Psoas muscle (tissue), 8 donors: ENCODE measurements at regions of chr12 and their contacts with region 1.

Region 1: GRCh38 chr12:122526683-122527477 is at the starts of genes KNTC1 and RSRC2:
- DNase-seq: peak; percentile 95 to 98
- ATAC-seq: peak; percentile 93 to 98 (median 97)
- H3K4me3 ChIP-seq: peak within 1 kb of the TSS; percentile 85
- H3K27ac ChIP-seq: peak within 1 kb of the TSS; percentile 98
- H3K4me1 ChIP-seq: peaks cover 48% of the 10 kb centered on the region
- H3K27me3 ChIP-seq: no peaks in the 10 kb centered on the region
- CTCF ChIP-seq: no peak
- total RNA-seq, gene KNTC1: 1.5 to 2.5 (median 2.2) TPM
- total RNA-seq, gene RSRC2: 44.0 to 64.6 (median 53.3) TPM

Region 2: GRCh38 chr12:122265931-122266771 is 260.7 kb before region 1 on chr12 and contains the start of gene VPS33A:
- intact Hi-C with region 1: loop called in 1 of 2 experiments (anchors 2 kb)
- DNase-seq: peak; percentile 96 to 98
- ATAC-seq: peak; percentile 91 to 95 (median 92)
- H3K4me3 ChIP-seq: peak within 1 kb of the TSS; percentile 99
- H3K27ac ChIP-seq: peak within 1 kb of the TSS; percentile 89
- H3K4me1 ChIP-seq: peaks cover 13% of the 10 kb centered on the region
- H3K27me3 ChIP-seq: no peaks in the 10 kb centered on the region
- CTCF ChIP-seq: no peak
- total RNA-seq, gene VPS33A: 17.1 to 20.0 (median 17.2) TPM

Region 3: DNA sequence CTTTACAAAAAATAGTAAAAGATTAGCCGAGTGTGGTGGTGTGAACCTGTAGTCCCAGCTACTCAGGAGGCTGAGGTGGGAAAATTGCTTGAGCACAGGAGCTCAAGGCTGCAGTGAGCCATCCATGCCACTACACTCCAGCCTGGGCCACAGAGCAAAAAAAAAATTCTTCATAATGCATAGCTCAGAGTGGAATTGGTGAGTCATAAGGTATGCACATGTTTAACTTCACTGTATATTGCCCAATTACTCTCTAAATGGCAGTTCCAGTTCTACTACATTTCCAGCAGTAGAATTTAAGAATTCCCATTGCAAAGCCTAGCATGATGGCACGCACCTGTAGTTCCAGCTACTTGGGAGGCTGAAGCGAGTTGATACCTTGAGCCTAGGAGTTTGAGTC is 77.5 kb before region 1 on chr12:
- intact Hi-C with region 1: no loop called
- DNase-seq: no peak
- ATAC-seq: no peak
- H3K4me3 ChIP-seq: no peak overlapping the region
- H3K27ac ChIP-seq: no peak overlapping the region
- H3K4me1 ChIP-seq: no peaks in the 10 kb centered on the region
- H3K27me3 ChIP-seq: no peaks in the 10 kb centered on the region
- CTCF ChIP-seq: no peak

Region 4: GRCh38 chr12:122500685-122501488 is 26.0 kb before region 1 on chr12 and contains the start of gene ZCCHC8:
- intact Hi-C with region 1: loop called in 1 of 2 experiments (anchors 1 kb)
- DNase-seq: peak; percentile 97 to 98
- ATAC-seq: peak; percentile 93 to 96 (median 95)
- H3K4me3 ChIP-seq: peak within 1 kb of the TSS; percentile 96
- H3K27ac ChIP-seq: peak within 1 kb of the TSS; percentile 99
- H3K4me1 ChIP-seq: peaks cover 36% of the 10 kb centered on the region
- H3K27me3 ChIP-seq: no peaks in the 10 kb centered on the region
- CTCF ChIP-seq: no peak
- total RNA-seq, gene ZCCHC8: 10.9 to 22.2 (median 14.3) TPM

Region 5: GRCh38 chr12:122571821-122572220 is 44.9 kb after region 1 on chr12:
- intact Hi-C with region 1: no loop called
- DNase-seq: no peak
- ATAC-seq: no peak
- H3K4me3 ChIP-seq: no peak overlapping the region
- H3K27ac ChIP-seq: no peak overlapping the region
- H3K4me1 ChIP-seq: no peaks in the 10 kb centered on the region
- H3K27me3 ChIP-seq: no peaks in the 10 kb centered on the region
- CTCF ChIP-seq: no peak

Region 6: DNA sequence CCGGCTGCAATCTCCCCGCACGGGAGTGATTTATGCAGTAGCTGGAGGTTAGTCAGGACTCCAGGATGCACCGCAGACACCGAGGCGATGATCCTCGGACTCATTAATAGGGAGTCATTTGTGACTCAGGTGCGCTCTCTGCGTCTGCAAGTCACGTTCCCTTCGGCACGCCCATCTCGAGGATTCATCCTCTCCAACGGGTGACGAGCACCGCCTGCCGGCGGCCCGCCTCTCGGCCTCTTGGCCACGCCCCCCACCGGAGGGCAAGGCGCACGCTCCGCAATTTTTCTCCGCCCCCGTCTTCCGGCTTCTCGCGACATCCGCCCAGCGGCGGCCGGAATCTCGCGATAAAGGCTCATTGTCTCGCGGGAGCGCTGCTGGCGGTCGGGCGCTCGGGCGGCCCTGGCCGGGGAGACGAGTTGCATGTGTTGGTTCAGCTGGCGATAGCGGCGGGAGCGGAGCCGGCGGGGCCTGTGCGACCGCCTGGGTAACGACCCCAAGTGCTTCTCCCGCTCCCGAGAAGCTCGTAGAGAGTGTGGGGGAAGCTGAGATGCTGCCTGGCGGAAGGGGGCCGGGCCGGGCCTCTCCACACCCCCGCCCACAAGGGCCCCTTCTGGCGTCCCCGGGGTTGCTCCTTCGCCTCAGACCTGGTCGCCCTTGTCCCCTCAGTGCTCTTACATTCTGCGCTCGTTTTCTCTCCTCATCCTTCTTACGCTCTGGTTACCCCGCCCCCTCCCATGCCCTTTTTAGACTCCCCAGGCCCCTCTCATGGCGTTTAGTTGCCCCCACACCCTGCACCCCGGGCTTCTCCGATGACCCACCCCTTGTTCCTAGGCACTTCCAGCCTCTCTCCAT is 225.8 kb after region 1 on chr12 and contains the start of gene DENR:
- intact Hi-C with region 1: loop called (anchors 2 to 10 kb)
- DNase-seq: peak; percentile 98 to 99
- ATAC-seq: peak; percentile 99 to 100 (median 100)
- H3K4me3 ChIP-seq: peak within 1 kb of the TSS; percentile 98
- H3K27ac ChIP-seq: peak within 1 kb of the TSS; percentile 90
- H3K4me1 ChIP-seq: peaks cover 14% of the 10 kb centered on the region
- H3K27me3 ChIP-seq: no peaks in the 10 kb centered on the region
- CTCF ChIP-seq: peak; percentile 59
- total RNA-seq, gene DENR: 30.2 to 39.0 (median 33.5) TPM